ENCODE measurements at regions of chr13 and their contacts with region 1.

Region 1: DNA sequence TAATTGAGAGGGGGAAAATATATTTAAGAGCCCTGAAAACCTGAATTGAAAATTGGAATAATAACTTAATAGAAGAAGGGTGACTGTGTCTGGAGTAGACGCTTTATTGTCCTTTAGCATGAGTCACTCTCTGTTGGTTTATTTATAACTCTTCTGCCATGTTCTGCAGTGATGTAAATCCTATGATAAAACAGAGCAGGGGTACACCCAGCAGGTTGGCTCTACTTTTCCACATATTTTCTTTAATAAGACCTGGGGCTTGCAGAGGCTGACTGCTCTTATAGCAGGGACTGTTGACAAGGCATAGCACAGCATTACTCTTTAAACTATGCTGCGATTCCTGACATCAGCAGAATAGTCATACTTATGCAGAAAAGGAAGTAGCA is 389.9 kb upstream of the PCDH9 start:
- DNase-seq: no peak
- H3K4me3 ChIP-seq: no peak overlapping the region
- H3K27ac ChIP-seq: no peak overlapping the region
- H3K4me1 ChIP-seq: no peaks in the 10 kb centered on the region
- H3K27me3 ChIP-seq: no peaks in the 10 kb centered on the region
- CTCF ChIP-seq: no peak
- EP300 ChIP-seq: no peak
- POLR2A ChIP-seq: no peak

Region 2: DNA sequence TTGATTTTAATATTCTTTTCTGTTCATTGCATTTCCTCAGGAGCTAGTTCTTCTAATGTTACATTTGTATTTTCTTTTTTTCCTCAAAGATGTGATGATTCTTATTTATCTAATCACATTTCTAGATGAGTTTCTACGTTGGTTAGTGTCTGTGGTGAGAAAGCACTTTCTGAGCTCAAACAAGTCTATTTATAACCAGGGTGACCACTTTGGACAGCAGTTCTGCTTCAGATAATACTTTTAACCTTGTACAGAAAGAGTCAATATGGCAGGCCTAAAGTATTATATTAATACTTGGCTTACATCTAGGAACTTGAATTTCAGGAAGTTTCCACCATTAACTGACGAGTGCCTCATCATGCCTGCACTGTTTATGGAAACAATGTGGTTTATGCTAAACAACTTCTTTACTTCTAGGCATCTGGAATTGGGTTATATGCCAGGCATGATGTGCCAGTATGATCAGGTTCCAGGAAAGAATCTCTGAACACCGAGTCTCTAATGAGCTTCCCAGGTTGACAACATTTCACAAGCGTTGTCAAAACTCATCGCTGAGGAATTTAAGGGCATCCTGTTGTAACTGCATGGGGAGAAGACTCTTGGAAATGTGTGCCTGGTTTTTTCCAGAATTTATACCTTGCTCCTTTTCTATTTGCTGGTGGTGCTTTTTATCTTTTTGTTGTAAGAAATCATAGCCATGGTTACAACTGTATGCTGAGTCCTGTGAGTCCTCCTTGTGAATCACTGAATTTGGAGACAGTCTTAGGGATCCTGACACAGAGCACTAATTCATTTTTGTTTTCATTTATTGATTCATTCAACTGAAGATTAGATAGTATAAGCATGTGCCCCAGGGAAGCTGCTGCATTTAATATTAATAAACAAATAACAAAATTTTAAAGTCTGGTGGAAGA is 45.4 kb before region 1 on chr13:
- intact Hi-C with region 1: no loop called
- DNase-seq: no peak
- H3K4me3 ChIP-seq: no peak overlapping the region
- H3K27ac ChIP-seq: no peak overlapping the region
- H3K4me1 ChIP-seq: no peaks in the 10 kb centered on the region
- H3K27me3 ChIP-seq: peaks cover under 1% of the 10 kb centered on the region
- CTCF ChIP-seq: no peak
- EP300 ChIP-seq: no peak
- POLR2A ChIP-seq: no peak

Region 3: GRCh38 chr13:67977066-67977465 is 357.1 kb after region 1 on chr13:
- intact Hi-C with region 1: loop called in 1 of 4 experiments (anchors 10 kb)
- DNase-seq: no peak
- H3K4me3 ChIP-seq: no peak overlapping the region
- H3K27ac ChIP-seq: no peak overlapping the region
- H3K4me1 ChIP-seq: no peaks in the 10 kb centered on the region
- H3K27me3 ChIP-seq: no peaks in the 10 kb centered on the region
- CTCF ChIP-seq: no peak
- EP300 ChIP-seq: no peak
- POLR2A ChIP-seq: no peak

Measured in ovary (tissue), 10 donors.